PC-3 (cell line): ENCODE measurements at regions of chr19 and their contacts with region 1.

Region 1: DNA sequence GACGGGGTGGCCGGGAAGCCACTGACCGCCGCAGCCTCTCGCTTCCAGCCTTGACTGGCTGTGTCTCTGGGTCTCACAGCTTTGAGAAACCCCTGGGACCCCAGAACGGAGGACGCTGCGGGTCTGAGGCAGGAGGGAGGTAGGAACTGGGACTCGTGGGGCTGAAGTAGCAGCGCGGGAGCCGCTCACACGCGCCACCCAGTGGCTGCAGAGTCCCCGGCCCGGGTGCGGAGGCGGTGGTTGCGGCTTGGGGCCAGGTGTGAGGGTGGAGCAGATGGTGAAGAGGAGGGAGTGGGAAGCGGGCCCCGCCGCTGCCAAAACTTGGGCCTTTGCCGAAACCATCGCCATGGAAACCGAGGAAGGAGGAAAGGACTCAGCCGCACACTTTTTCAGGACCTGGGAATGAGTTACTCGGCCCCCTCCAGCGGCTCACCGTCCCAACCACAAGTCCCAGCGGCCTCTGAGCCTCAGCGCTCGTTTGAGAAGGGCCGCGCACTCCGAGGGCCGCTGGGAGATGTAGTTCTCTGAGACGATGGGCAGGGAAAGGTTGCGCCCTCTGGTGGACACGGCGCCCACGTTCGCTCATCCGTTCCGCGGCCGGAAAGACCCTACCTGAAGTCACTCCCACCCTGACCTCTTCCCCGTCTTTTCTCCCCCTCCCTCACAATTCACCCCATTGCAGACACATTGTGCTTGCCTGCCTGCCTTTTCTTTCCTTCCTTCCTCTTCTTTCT is 2.2 kb upstream of the SLC17A7 start:
- DNase-seq: peak; percentile 98
- ATAC-seq: peak; percentile 84
- H3K4me3 ChIP-seq: peak overlapping the region; percentile 87
- H3K27ac ChIP-seq: no peak overlapping the region
- H3K4me1 ChIP-seq: no peaks in the 10 kb centered on the region
- H3K27me3 ChIP-seq: peaks cover 36% of the 10 kb centered on the region
- CTCF ChIP-seq: peak; percentile 93

Region 2: DNA sequence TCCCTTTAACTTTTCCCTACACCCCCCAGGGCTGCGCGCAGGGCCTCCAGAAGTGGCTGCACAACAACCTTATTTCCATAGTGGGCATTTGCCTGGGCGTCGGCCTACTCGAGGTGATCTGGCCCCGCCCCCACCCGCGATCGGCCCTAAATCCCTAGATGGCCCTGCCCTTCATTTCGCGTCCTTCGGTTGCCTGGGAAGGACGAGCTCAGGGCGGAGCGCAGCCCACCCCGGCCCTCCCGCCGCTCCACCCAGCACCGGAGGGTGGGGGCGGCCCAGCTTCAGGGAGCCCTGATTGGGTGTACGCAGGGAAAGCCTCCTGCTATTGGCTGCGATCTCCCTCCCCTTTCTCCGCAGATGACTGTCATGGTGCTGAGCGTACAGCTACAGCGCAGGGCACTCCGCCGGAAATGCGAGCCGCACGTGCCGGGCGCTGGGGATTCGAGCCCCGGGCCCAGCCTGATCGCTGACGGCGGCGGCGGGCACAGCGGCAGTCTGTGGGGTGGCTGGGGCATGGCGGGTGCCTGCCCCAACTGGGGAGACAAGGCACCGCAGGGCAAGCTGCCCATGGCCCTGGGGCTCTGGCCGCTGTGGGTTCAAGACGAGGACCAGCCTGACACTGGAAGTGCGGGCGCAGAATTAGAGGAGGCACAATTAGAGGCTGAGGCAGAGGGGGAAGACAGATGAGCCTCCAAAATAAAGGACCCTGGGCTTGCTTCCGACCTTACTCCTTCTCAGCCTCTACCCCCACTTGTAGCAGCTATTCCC is 104.0 kb before region 1 on chr19:
- CTCF ChIA-PET with region 1: no interaction called
- POLR2A ChIA-PET with region 1: no interaction called
- intact Hi-C with region 1: loop called (anchors 1 kb)
- DNase-seq: peak; percentile 93
- ATAC-seq: peak; percentile 89
- H3K4me3 ChIP-seq: peak overlapping the region; percentile 57
- H3K27ac ChIP-seq: no peak overlapping the region
- H3K4me1 ChIP-seq: peaks cover 14% of the 10 kb centered on the region
- H3K27me3 ChIP-seq: no peaks in the 10 kb centered on the region
- CTCF ChIP-seq: no peak

Region 3: GRCh38 chr19:49391581-49392399 is 51.7 kb before region 1 on chr19:
- CTCF ChIA-PET with region 1: interaction called, 6 read pairs
- POLR2A ChIA-PET with region 1: no interaction called
- intact Hi-C with region 1: loop called (anchors 1 kb)
- DNase-seq: peak; percentile 95
- ATAC-seq: peak; percentile 99
- H3K4me3 ChIP-seq: no peak overlapping the region
- H3K27ac ChIP-seq: no peak overlapping the region
- H3K4me1 ChIP-seq: 0 out of 2 replicates have a peak, but pooled peaks cover 3% of the 10 kb centered on the region
- H3K27me3 ChIP-seq: no peaks in the 10 kb centered on the region
- CTCF ChIP-seq: peak; percentile 99

Region 4: DNA sequence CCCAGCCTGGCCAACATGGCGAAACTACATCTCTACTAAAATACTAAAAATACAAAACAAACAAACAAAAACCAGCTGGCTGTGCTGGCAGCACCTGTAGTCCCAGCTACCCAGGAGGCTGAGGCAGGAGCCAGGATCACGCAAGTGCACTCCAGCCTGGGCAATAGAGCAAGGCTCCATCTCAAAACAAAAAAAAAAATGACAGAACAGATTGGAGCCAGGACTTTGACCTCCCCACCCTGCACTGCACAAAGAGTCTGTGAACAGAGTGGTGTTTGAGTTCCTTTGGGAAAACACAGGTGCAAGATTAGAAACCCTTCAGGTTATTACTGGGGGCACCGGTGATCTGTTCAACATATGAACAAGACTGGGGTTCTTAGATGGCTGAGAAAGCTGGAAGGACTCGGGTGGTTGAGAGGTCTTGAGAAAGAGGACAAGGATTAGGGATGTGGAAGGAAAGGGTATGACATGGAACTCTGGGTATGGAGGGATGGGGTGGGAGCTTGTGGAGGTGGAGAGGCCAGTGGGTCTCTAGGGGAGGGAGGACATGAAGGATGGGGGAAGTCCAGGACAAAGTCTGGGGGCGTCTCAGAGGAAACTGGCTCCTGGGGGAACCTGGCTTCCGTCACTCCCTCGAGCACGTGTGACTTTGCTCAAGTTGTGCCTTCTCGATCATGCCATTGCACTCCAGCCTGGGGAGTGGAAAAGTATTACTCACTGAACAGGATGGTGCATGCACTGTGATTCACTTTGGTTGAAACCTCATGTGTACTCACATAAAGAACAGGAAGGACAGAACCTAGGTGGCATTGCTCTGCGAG is 110.1 kb after region 1 on chr19:
- CTCF ChIA-PET with region 1: interaction called, 18 read pairs
- POLR2A ChIA-PET with region 1: no interaction called
- intact Hi-C with region 1: no loop called
- DNase-seq: peak; percentile 90
- ATAC-seq: peak; percentile 98
- H3K4me3 ChIP-seq: no peak overlapping the region
- H3K27ac ChIP-seq: peak overlapping the region; percentile 55
- H3K4me1 ChIP-seq: peaks cover 15% of the 10 kb centered on the region
- H3K27me3 ChIP-seq: no peaks in the 10 kb centered on the region
- CTCF ChIP-seq: no peak